Thyroid gland (tissue), 4 donors: ENCODE measurements at regions of chr10 and their contacts with region 1.

Region 1: DNA sequence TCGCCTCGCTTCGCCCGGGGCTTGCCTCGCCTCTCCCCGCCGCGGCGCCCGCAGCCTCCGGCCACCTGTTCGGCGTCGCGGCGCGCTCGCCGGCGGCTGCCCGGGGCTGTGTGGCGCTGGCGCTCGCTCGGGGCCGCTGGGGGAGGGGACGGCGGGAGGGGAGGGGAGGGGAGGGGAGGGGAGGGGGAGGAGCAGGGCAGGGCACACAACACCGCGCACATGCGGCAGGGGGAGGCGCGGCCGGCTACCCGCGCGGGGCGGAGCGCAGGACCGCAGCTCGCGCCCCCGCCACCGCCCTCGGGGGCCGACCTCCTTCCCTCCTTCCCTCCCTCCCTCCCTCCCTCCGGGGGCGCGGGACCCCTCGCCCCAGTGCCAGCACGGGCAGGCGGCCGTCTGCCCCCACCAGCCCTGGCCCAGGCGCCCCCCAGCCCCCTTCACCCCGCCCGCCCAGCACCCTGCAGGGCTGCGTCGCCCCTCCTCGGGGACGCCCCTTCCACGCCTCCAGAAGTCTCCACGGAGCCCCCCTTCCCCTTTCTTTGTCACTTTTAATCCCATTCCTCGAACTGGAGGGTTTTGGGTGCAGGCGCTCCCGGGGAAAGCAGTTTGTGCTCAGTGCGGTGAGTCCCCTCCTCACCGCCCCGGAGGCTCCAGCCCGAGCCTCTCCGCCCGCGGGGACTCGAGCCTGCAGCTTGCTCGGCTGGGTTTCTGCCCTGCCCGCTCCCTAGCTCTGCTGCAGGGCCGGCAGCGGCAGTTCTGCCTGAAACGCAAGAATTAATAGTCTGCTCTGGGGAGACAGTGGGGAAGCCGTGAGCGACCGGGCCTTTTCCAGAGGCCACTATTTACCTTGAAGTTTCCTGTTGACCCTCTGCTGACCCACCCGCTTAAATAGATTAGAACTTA is at the start of gene PARD3:
- DNase-seq: peak; percentile 71 to 75
- H3K4me3 ChIP-seq: peak within 1 kb of the TSS; percentile 51 to 84 (median 78)
- H3K27ac ChIP-seq: peak within 1 kb of the TSS; percentile 78 to 91 (median 80)
- H3K4me1 ChIP-seq: peaks cover 16 to 26% of the 10 kb centered on the region in 2 donors
- H3K27me3 ChIP-seq: no peaks in the 10 kb centered on the region
- CTCF ChIP-seq: no peak
- POLR2A ChIP-seq: peak in 1 of 2 donors; percentile 59
- total RNA-seq, gene PARD3: 48.6 to 88.4 (median 57.7) TPM

Region 2: DNA sequence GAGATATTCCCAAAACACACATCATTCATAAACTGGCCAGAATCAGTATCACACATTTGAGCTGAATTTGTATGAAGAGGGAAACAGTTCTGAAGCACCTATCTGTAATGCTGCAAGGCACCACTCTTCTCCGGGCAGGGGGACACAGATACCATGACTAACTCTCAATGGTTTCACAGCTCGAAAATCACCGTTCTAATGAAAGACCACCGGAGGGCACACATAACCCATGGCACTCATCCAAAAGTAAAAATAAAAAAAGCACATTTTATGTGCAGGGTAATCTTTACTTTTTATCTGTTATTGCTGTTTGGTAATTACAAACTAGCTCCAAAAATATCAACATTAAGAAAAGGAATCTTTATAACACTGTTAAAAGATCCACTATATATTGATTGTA is 137.8 kb before region 1 on chr10:
- intact Hi-C with region 1: loop called (anchors 10 kb)
- DNase-seq: no peak
- H3K4me3 ChIP-seq: no peak overlapping the region
- H3K27ac ChIP-seq: no peak overlapping the region
- H3K4me1 ChIP-seq: peaks cover 17 to 30% of the 10 kb centered on the region in 2 donors
- H3K27me3 ChIP-seq: no peaks in the 10 kb centered on the region
- CTCF ChIP-seq: no peak
- POLR2A ChIP-seq: no peak

Region 3: DNA sequence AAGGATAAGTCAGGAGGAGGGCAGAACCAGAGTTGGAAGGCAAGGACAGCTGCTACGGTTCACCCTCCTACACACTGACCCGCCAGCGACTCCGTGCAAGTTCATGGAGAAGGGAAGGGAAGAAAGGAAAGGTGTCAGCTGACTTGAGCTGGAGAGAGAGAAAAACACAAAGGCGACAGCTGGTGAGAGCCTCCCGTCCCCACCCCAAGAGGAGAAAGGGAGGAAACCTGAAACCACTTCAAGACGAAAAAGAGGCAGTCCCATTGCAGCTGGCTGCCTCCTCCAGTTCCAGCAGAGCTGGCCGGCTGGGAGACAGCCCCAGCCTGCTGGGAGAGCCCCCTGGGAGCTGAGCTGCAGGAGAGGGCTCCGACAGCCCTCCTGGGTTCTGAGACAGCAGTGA is 75.5 kb before region 1 on chr10:
- intact Hi-C with region 1: loop called (anchors 10 kb)
- DNase-seq: peak; percentile 77 to 82
- H3K4me3 ChIP-seq: no peak overlapping the region
- H3K27ac ChIP-seq: peak overlapping the region in 2 of 3 donors; percentile 20 to 45
- H3K4me1 ChIP-seq: peaks cover 22 to 29% of the 10 kb centered on the region in 2 donors
- H3K27me3 ChIP-seq: no peaks in the 10 kb centered on the region
- CTCF ChIP-seq: no peak
- POLR2A ChIP-seq: peak in 1 of 2 donors; percentile 56

Region 4: GRCh38 chr10:34889004-34889869 is 73.8 kb after region 1 on chr10:
- intact Hi-C with region 1: no loop called
- DNase-seq: peak; percentile 60 to 66
- H3K4me3 ChIP-seq: no peak overlapping the region
- H3K27ac ChIP-seq: peak overlapping the region in 1 of 3 donors; percentile 30
- H3K4me1 ChIP-seq: peaks cover 0 to 16% of the 10 kb centered on the region in 2 donors
- H3K27me3 ChIP-seq: no peaks in the 10 kb centered on the region
- CTCF ChIP-seq: no peak
- POLR2A ChIP-seq: no peak